ENCODE measurements at regions of chr1 and their contacts with region 1.

Region 1: GRCh38 chr1:210373885-210374599 is 45.3 kb downstream of the HHAT start:
- DNase-seq: peak; percentile 96
- ATAC-seq: peak; percentile 81
- H3K4me3 ChIP-seq: no peak overlapping the region
- H3K27ac ChIP-seq: peak overlapping the region; percentile 32; the same call in 1 of the 2 replicates
- H3K4me1 ChIP-seq: peaks cover 0 to 33% of the 10 kb centered on the region in 2 experiments; a peak in 3 of 4 replicates
- H3K27me3 ChIP-seq: no peaks in the 10 kb centered on the region
- CTCF ChIP-seq: peak; percentile 76 to 99 (median 98)
- POLR2A ChIP-seq: peak; percentile 100
- RAD21 ChIP-seq: peak; percentile 49

Region 2: DNA sequence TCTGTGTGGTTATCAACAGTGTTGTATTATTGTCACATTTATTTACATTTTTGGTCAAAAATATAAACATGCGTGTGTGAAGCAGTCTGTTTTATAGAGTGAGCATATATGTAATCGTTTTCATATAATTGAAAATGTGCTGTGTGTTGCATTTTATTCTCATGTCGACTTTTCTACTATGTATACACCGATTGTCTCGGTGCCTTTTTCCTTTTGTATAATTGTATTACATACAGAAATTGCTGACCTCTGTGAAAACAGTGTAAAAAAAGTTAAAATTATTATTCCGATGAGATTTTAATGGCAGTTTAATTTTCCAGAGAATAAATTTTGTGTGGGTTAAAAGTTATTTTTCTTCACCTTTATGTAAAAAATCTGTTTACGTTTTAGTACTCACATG is 203.8 kb before region 1 on chr1:
- CTCF ChIA-PET with region 1: no interaction called
- POLR2A ChIA-PET with region 1: no interaction called
- RAD21 ChIA-PET with region 1: no interaction called
- intact Hi-C with region 1: no loop called
- DNase-seq: no peak
- ATAC-seq: no peak
- H3K4me3 ChIP-seq: no peak overlapping the region
- H3K27ac ChIP-seq: no peak overlapping the region
- H3K4me1 ChIP-seq: no peaks in the 10 kb centered on the region
- H3K27me3 ChIP-seq: no peaks in the 10 kb centered on the region
- CTCF ChIP-seq: no peak
- POLR2A ChIP-seq: no peak
- RAD21 ChIP-seq: no peak

Region 3: DNA sequence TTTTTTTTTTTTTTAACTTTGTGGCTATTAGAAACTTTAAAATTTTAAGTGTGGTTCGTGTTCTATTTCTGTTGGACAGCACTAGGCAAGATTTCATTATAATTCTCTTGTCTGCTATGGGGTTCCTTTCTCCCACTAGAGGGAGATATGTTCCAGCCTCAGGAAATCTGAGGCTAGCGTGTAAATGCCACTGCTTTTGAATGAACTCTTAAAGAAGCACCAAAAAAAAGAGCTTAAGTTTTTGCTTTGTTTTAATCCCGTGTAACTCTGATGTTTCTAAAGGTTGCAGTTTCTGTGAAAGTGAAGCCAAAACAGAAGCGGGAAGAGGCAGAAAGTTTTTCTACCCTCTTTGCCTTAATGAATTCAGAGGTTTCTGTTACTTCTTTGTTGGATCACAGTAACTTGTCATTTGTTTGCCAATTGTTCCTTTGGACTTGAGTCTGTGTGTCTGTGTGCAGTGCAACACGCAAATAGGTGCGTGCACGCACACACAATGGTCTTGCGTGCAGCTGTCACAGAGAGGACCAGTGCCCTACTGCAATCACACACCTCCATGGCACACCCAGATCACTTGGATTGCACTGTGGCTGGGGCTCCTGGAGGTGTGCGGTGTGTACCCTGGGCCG is 13.1 kb before region 1 on chr1:
- CTCF ChIA-PET with region 1: interaction called, 13 read pairs
- POLR2A ChIA-PET with region 1: interaction called, 35 read pairs
- RAD21 ChIA-PET with region 1: no interaction called
- intact Hi-C with region 1: no loop called
- DNase-seq: peak; percentile 16
- ATAC-seq: peak; percentile 83
- H3K4me3 ChIP-seq: no peak overlapping the region
- H3K27ac ChIP-seq: no peak overlapping the region
- H3K4me1 ChIP-seq: no peaks in the 10 kb centered on the region
- H3K27me3 ChIP-seq: no peaks in the 10 kb centered on the region
- CTCF ChIP-seq: peak; percentile 57 to 71 (median 66)
- POLR2A ChIP-seq: no peak
- RAD21 ChIP-seq: peak; percentile 72

Region 4: DNA sequence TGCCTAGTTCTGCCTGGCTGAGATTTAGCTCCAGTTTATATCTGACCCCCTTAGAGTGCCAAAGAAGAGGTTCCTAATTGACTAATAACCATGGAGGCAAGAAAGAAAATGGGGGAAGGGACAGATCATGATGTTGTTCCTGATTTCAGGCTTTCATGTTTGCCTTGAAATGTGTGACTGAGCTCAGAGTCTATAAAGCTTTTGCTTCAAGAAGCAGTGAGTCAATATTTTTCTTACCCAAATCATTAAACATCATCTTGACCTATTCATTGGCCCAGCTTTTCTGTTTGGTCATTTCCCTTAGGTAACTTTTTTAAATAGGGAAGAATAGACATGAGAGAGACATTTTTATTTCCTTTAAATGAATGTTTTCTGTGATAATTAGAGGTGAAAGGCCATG is 10.6 kb after region 1 on chr1:
- CTCF ChIA-PET with region 1: interaction called, 12 read pairs
- POLR2A ChIA-PET with region 1: interaction called, 10 read pairs
- RAD21 ChIA-PET with region 1: no interaction called
- intact Hi-C with region 1: no loop called
- DNase-seq: no peak
- ATAC-seq: no peak
- H3K4me3 ChIP-seq: no peak overlapping the region
- H3K27ac ChIP-seq: no peak overlapping the region
- H3K4me1 ChIP-seq: no peaks in the 10 kb centered on the region
- H3K27me3 ChIP-seq: no peaks in the 10 kb centered on the region
- CTCF ChIP-seq: no peak
- POLR2A ChIP-seq: no peak
- RAD21 ChIP-seq: no peak

Region 5: GRCh38 chr1:210477381-210477783 is 103.3 kb after region 1 on chr1:
- CTCF ChIA-PET with region 1: no interaction called
- POLR2A ChIA-PET with region 1: no interaction called
- RAD21 ChIA-PET with region 1: no interaction called
- intact Hi-C with region 1: no loop called
- DNase-seq: peak; percentile 2
- ATAC-seq: peak; percentile 60; the same call in 1 of the 2 replicates
- H3K4me3 ChIP-seq: no peak overlapping the region
- H3K27ac ChIP-seq: no peak overlapping the region
- H3K4me1 ChIP-seq: no peaks in the 10 kb centered on the region
- H3K27me3 ChIP-seq: peaks cover 45% of the 10 kb centered on the region
- CTCF ChIP-seq: 0 out of 6 replicates have a peak, but pooled peaks of 1 of the 3 experiments have one; percentile 20
- POLR2A ChIP-seq: no peak
- RAD21 ChIP-seq: no peak; the same call in 1 of the 2 replicates

Measured in HCT116 (cell line).